ENCODE measurements at regions of chr3 and their contacts with region 1.

Region 1: DNA sequence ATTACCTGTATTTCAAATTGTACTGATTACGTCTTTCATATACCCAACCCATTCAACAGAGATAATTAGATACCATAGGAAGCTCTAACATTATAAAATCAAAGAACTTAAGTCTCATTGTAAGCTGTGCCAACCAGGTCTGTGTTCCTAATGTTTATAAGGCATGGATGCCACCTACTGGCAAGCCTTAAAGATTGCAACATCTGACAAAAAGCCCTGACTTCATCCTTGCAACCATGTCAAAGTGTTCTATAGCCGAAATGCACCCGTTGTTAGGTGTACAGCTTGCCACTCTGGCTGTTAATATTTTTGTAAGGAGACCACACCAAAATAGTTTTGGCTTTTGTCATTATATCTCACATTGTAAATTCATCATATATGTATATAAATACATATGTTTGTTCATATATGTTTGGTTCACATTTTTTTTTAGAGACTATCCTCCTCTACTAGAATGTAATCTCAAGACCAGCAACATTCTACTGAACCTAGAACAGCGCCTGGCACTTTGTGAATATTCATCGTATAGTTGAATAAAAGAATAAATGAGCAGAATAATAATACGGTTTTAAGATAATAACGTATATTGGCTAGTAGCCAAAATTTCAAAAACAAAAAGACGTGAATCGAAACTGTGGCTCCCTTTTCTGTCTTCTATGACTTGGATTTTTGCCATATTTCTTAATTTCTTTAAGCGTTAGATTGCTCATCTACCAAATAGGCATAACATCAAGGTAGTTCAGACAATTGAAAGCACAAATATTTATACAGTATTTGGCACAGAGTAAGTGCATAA is 258.1 kb downstream of the TBL1XR1 start:
- DNase-seq: peak; percentile 67
- ATAC-seq: peak; percentile 98
- H3K4me3 ChIP-seq: no peak overlapping the region
- H3K27ac ChIP-seq: no peak overlapping the region
- H3K4me1 ChIP-seq: no peaks in the 10 kb centered on the region
- H3K27me3 ChIP-seq: no peaks in the 10 kb centered on the region
- CTCF ChIP-seq: peak; percentile 61 to 81 (median 70); a peak in 5 of 6 replicates
- POLR2A ChIP-seq: no peak
- RAD21 ChIP-seq: peak; percentile 91

Region 2: GRCh38 chr3:176663837-176664831 is 275.1 kb before region 1 on chr3:
- CTCF ChIA-PET with region 1: interaction called, 8 read pairs
- POLR2A ChIA-PET with region 1: no interaction called
- RAD21 ChIA-PET with region 1: no interaction called
- intact Hi-C with region 1: loop called (anchors 5 kb)
- DNase-seq: peak; percentile 33
- ATAC-seq: peak; percentile 81
- H3K4me3 ChIP-seq: no peak overlapping the region
- H3K27ac ChIP-seq: no peak overlapping the region
- H3K4me1 ChIP-seq: no peaks in the 10 kb centered on the region
- H3K27me3 ChIP-seq: no peaks in the 10 kb centered on the region
- CTCF ChIP-seq: peak in 2 of 3 experiments; percentile 26 to 55; a peak in 4 of 6 replicates
- POLR2A ChIP-seq: no peak
- RAD21 ChIP-seq: peak; percentile 74

Region 3: DNA sequence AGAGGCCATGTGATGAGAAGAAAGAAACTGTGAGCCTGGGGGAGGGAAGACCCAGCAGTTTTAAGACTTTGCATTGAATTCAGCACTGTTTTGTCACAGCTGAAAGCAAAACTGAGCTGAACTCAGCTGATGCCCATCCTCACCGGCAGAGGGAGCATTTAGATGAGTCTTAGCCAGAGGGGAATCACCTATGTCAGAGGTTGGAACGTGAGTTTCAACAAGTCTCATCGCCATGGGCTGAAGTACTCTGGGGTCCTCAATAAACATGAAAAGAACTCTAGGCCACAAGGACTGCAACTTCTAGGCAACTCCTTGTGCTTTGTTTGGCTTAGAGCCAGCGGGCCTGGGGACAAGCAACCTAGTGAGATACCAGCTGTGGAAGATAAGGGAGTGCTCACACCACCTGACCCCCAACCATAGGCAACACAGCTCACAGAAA is 66.4 kb before region 1 on chr3:
- CTCF ChIA-PET with region 1: interaction called, 21 read pairs
- POLR2A ChIA-PET with region 1: no interaction called
- RAD21 ChIA-PET with region 1: interaction called, 10 to 16 read pairs
- intact Hi-C with region 1: loop called (anchors 1 kb)
- DNase-seq: peak; percentile 10
- ATAC-seq: peak; percentile 87
- H3K4me3 ChIP-seq: no peak overlapping the region
- H3K27ac ChIP-seq: no peak overlapping the region
- H3K4me1 ChIP-seq: no peaks in the 10 kb centered on the region
- H3K27me3 ChIP-seq: no peaks in the 10 kb centered on the region
- CTCF ChIP-seq: peak; percentile 44 to 76 (median 61); a peak in 5 of 6 replicates
- POLR2A ChIP-seq: no peak
- RAD21 ChIP-seq: peak; percentile 66

Region 4: GRCh38 chr3:178385280-178385952 is 1446.2 kb after region 1 on chr3:
- CTCF ChIA-PET with region 1: interaction called, 7 read pairs
- POLR2A ChIA-PET with region 1: no interaction called
- RAD21 ChIA-PET with region 1: no interaction called
- intact Hi-C with region 1: loop called (anchors 5 kb)
- DNase-seq: peak; percentile 3
- ATAC-seq: peak; percentile 67
- H3K4me3 ChIP-seq: no peak overlapping the region
- H3K27ac ChIP-seq: no peak overlapping the region
- H3K4me1 ChIP-seq: no peaks in the 10 kb centered on the region
- H3K27me3 ChIP-seq: no peaks in the 10 kb centered on the region
- CTCF ChIP-seq: peak; percentile 40 to 84 (median 56); a peak in 5 of 6 replicates
- POLR2A ChIP-seq: no peak
- RAD21 ChIP-seq: peak; percentile 85

Measured in HCT116 (cell line).